Activated CD4-positive, alpha-beta memory T cell treated with anti-CD3 and anti-CD28 coated beads for 36 hours (primary cell): ENCODE measurements at regions of chr3 and their contacts with region 1.

Region 1: GRCh38 chr3:156040041-156040440 is 80.3 kb upstream of the KCNAB1 start:
- DNase-seq: no peak
- H3K4me3 Mint-ChIP-seq: no peak overlapping the region
- H3K27ac Mint-ChIP-seq: no peak overlapping the region
- H3K4me1 Mint-ChIP-seq: peaks cover 2% of the 10 kb centered on the region
- H3K27me3 Mint-ChIP-seq: peaks cover 3% of the 10 kb centered on the region

Region 2: GRCh38 chr3:155960060-155960459 is 80.0 kb before region 1 on chr3:
- CTCF ChIA-PET with region 1: no interaction called
- POLR2A ChIA-PET with region 1: no interaction called
- intact Hi-C with region 1: no loop called
- DNase-seq: no peak
- H3K4me3 Mint-ChIP-seq: no peak overlapping the region
- H3K27ac Mint-ChIP-seq: no peak overlapping the region
- H3K4me1 Mint-ChIP-seq: no peaks in the 10 kb centered on the region
- H3K27me3 Mint-ChIP-seq: no peaks in the 10 kb centered on the region

Region 3: DNA sequence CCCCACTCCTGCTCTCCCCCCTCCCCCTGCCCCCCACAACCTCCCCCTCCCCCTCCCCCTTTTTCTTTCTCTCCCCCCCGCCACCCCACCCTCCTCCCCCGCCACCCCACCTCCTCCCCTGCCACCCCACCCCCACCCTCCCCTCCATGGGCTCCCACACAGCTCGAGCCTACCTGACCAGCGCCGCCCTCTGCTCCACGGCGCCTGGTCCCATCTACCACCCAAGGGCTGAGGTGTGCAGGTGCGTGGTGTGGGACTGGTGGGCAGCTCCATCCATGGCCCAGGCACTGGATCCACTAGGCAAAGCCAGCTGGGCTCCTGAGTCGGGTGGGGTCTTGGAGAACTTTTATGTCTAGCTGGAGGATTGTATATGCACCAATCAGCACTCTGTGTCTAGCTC is 12.1 kb after region 1 on chr3:
- CTCF ChIA-PET with region 1: interaction called, 12 read pairs
- POLR2A ChIA-PET with region 1: no interaction called
- intact Hi-C with region 1: no loop called
- DNase-seq: no peak
- H3K4me3 Mint-ChIP-seq: no peak overlapping the region
- H3K27ac Mint-ChIP-seq: no peak overlapping the region
- H3K4me1 Mint-ChIP-seq: no peaks in the 10 kb centered on the region
- H3K27me3 Mint-ChIP-seq: peaks cover 10% of the 10 kb centered on the region

Region 4: GRCh38 chr3:156135921-156136638 is 96.0 kb after region 1 on chr3:
- CTCF ChIA-PET with region 1: no interaction called
- POLR2A ChIA-PET with region 1: no interaction called
- intact Hi-C with region 1: loop called (anchors 5 kb)
- DNase-seq: no peak
- H3K4me3 Mint-ChIP-seq: no peak overlapping the region
- H3K27ac Mint-ChIP-seq: no peak overlapping the region
- H3K4me1 Mint-ChIP-seq: no peaks in the 10 kb centered on the region
- H3K27me3 Mint-ChIP-seq: peaks cover 16% of the 10 kb centered on the region